ENCODE measurements at regions of chr17 and their contacts with region 1.

Region 1: DNA sequence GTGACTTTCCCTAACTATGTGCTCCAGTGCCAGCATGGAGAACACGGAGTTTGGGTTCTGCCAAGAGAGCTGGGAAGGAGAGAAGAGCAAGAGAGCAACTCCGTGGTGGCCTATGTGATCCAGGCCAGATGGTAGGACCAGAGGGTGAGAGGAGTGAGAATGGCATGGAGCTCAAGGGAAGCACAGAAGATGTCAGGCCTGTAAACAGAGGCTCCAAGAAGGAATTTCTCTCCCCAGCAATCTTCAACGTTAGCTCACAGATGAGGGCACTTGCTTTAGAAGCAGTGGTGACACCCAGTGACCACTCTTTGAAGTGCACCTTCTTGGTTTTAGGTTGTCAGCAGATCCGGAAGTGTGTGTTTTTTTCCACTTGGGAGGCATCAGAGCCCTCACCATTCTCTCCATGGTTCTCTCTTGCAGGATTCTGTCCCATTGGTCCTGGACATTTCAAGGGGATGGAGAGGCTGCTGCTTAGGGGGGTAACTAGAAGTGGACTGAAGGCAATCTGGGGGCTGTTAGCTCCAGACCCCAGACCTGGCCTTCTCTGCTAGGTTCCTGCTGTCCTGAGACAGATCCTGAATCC is 18.1 kb upstream of the TMEM98 start:
- ATAC-seq: peak; percentile 38 to 75 (median 54)
- H3K4me3 ChIP-seq: no peak overlapping the region
- H3K27ac ChIP-seq: no peak overlapping the region
- H3K4me1 ChIP-seq: no peaks in the 10 kb centered on the region

Region 2: GRCh38 chr17:32783602-32784001 is 126.3 kb before region 1 on chr17:
- in situ Hi-C with region 1: loop called in 3 of 9 experiments (anchors 25 kb)
- ATAC-seq: peak in 4 of 8 experiments; percentile 25 to 56 (median 41)
- H3K4me3 ChIP-seq: no peak overlapping the region
- H3K27ac ChIP-seq: no peak overlapping the region
- H3K4me1 ChIP-seq: no peaks in the 10 kb centered on the region

Region 3: GRCh38 chr17:32840241-32840640 is 69.6 kb before region 1 on chr17:
- in situ Hi-C with region 1: no loop called
- ATAC-seq: no peak
- H3K4me3 ChIP-seq: no peak overlapping the region
- H3K27ac ChIP-seq: no peak overlapping the region
- H3K4me1 ChIP-seq: no peaks in the 10 kb centered on the region

Measured in motor neuron (in vitro differentiated cells).